Lower lobe of right lung (tissue), 2 donors: ENCODE measurements at regions of chr3 and their contacts with region 1.

Region 1: GRCh38 chr3:13455644-13456043 is 24.5 kb upstream of the HDAC11 start:
- DNase-seq: no peak
- ATAC-seq: no peak
- H3K4me3 ChIP-seq: no peak overlapping the region
- H3K27ac ChIP-seq: no peak overlapping the region
- H3K4me1 ChIP-seq: peaks cover 15% of the 10 kb centered on the region
- H3K27me3 ChIP-seq: no peaks in the 10 kb centered on the region
- CTCF ChIP-seq: no peak

Region 2: DNA sequence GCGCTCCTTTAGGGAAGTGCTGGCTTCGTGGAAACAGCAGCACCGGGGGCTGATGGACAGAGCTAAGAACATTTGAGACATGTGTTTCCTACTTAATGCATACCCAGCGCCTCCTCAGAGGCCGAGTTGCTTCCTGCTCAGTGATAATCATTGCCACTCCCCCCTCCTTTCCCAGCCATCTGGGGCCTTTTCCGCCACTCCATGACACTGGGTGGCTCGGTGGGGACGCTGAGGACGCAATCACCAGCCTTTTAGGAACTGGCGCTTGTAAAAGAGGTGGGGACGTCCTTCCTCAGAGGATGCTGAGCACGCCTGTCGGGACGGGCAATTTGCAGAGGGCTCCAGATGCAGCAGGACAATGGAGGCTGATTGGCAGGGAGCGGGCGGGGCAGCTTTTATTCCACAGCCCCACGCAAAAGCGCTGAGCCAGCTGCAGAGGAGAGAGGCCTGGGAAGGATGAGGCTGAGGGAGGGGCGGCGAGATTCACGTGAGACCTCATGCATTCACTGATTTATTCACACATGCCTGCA is 360.2 kb before region 1 on chr3:
- intact Hi-C with region 1: loop called (anchors 5 kb)
- DNase-seq: no peak
- ATAC-seq: no peak
- H3K4me3 ChIP-seq: no peak overlapping the region
- H3K27ac ChIP-seq: no peak overlapping the region
- H3K4me1 ChIP-seq: peaks cover 8% of the 10 kb centered on the region
- H3K27me3 ChIP-seq: peaks cover 4% of the 10 kb centered on the region
- CTCF ChIP-seq: no peak